ENCODE measurements at regions of chr6 and their contacts with region 1.

Region 1: GRCh38 chr6:149723771-149724417 is 6.0 kb upstream of the LATS1 start:
- DNase-seq: peak in 40 of 42 donors; percentile 15 to 85 (median 63)

Region 2: DNA sequence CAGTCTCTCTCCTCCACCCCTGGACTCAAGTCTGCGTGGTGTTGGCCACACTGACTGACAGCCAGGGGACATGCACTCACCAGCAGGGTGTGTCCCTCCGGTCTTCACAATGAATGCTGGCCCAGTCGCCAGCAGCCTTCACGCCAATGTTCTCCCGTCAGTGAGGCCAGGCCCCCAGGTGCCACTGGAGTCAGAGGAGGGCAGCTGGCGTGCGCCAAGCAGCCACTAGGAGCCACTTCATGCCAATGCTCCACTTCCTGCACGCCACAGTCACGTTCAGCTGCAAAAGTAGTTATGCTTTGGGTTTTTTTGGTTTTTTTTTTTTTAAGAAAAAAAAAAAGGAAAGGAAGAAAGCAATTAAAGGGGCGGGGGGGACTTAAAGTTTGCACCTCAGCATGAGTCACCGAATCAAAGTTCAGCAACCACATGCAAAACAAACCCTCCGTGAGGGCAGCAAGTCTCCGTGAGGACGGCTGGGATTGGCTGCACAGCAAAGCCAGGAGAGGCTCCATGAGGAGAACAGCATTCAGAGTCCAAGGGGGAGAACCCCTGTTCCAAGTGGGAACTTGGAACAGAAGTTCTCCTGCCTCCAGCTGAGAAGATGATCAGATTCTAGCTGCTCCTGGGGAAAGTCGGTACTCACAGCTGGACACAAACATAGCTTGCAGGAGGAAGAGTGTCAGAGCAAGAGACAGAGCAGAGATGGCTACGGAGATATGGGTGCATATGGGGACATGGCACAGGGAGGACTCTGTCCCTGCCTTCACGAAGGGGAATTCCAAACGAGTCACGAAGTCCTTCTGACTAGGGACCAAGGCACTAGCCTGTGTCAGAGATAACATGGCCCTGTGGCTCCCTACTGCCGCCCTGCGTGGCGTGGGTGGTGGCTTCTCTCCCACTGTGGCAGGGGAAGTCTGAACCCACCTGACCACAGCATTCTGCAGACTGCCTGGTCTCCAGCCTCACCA is 238.9 kb before region 1 on chr6 and contains the start of gene ZC3H12D:
- intact Hi-C with region 1: no loop called
- DNase-seq: peak in 4 of 42 donors; percentile 6 to 43 (median 30)

Region 3: DNA sequence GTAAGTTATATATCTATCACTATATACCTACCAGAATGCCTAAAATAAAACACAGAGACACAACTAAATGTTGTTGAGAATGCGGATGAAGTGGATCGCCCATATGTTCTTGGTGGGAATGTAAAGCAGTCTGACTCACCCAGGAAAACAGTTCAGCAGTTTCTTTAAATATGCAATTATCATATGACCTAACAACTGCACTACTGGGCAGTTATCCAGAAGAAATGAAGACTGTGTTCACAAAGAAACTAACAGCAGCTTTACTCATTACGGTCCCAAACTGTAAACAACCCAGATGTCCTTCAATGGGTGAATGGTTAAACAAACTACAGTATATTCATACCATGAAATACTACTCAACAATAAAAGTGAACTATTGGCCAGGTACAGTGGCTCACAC is 224.8 kb before region 1 on chr6:
- intact Hi-C with region 1: no loop called
- DNase-seq: peak in 1 of 42 donors; percentile 13

Region 4: GRCh38 chr6:149749594-149750135 is 25.8 kb after region 1 on chr6 and contains the start of gene PCMT1:
- intact Hi-C with region 1: loop called (anchors 2 kb)
- DNase-seq: peak; percentile 68 to 95 (median 89)

Region 5: DNA sequence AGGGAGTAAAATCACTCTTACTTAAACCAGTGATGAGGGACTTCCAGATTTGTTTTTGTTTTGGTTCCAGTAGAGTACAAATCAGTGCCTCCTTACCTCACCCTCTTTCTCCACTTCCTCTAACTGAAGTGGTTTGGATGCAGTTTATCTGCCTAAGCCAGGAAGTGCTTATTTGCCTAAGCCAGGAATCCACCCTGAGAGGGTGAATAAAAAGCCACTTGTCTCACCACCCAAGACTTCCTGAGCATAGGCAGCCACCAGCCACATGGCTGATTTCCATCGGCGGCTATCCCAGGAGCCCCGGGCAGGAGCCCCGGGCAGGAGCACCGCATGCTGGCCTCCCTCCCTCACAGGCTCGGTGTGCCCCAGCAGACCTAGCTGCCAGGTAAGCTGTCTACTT is 128.3 kb after region 1 on chr6:
- intact Hi-C with region 1: no loop called
- DNase-seq: no peak